IMR-90 (cell line): ENCODE measurements at regions of chr12 and their contacts with region 1.

Region 1: GRCh38 chr12:39272871-39273770 is 169.8 kb downstream of the KIF21A start:
- DNase-seq: peak; percentile 3
- ATAC-seq: no peak
- H3K4me3 ChIP-seq: no peak overlapping the region
- H3K27ac ChIP-seq: no peak overlapping the region
- H3K4me1 ChIP-seq: no peaks in the 10 kb centered on the region
- H3K27me3 ChIP-seq: no peaks in the 10 kb centered on the region
- CTCF ChIP-seq: peak; percentile 52
- POLR2A ChIP-seq: no peak
- RAD21 ChIP-seq: no peak

Region 2: DNA sequence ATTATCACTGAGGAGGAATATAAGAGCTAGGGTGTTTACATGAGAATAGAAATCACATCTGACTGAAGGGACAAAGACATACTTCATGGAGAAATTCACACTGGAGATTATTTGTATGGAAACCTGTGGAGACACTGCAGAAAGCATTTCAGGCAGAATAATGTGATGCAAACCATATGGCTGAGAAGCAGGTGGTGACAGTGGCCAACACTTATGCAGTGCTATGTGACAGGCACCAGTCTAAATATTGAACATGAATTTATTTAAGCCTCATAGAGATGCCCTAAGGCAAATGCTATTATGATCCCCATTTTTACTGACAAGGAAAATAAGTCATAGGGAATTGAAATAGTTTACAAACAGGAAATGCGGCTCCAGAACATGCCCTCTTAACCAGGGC is 940.3 kb before region 1 on chr12:
- CTCF ChIA-PET with region 1: interaction called, 3 read pairs
- POLR2A ChIA-PET with region 1: no interaction called
- dilution Hi-C with region 1: no loop called
- in situ Hi-C with region 1: loop called (anchors 10 kb)
- intact Hi-C with region 1: loop called (anchors 2 kb)
- DNase-seq: no peak
- ATAC-seq: no peak
- H3K4me3 ChIP-seq: no peak overlapping the region
- H3K27ac ChIP-seq: no peak overlapping the region
- H3K4me1 ChIP-seq: no peaks in the 10 kb centered on the region
- H3K27me3 ChIP-seq: no peaks in the 10 kb centered on the region
- CTCF ChIP-seq: no peak
- POLR2A ChIP-seq: no peak
- RAD21 ChIP-seq: no peak

Region 3: GRCh38 chr12:39329018-39329417 is 55.9 kb after region 1 on chr12:
- CTCF ChIA-PET with region 1: no interaction called
- POLR2A ChIA-PET with region 1: no interaction called
- dilution Hi-C with region 1: no loop called
- in situ Hi-C with region 1: no loop called
- intact Hi-C with region 1: loop called (anchors 10 kb)
- DNase-seq: no peak
- ATAC-seq: no peak
- H3K4me3 ChIP-seq: no peak overlapping the region
- H3K27ac ChIP-seq: no peak overlapping the region
- H3K4me1 ChIP-seq: no peaks in the 10 kb centered on the region
- H3K27me3 ChIP-seq: no peaks in the 10 kb centered on the region
- CTCF ChIP-seq: no peak
- POLR2A ChIP-seq: no peak
- RAD21 ChIP-seq: no peak